ENCODE measurements at regions of chr12 and their contacts with region 1.

Region 1: DNA sequence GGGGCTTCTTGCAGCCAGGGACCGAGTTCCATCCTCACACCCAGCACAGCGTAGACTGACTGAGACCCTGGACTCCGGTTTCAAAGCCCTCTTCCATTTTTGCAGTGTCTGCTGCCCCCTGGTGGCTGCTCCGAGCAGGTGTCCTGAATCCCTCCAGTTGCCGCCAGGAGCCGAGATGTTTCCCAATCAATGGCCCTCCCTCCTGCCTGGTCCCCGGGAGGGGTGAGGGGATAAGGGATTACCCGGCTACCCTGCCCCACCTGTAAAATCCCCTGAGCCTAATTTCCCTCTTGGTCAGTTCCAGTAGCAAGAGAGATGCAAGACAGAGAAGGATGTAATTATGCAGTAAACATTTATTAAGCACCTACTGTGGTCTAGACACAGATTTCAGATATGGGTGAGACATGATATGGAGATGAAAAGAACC is 55.0 kb downstream of the PHETA1 start:
- DNase-seq: peak; percentile 90
- ATAC-seq: peak; percentile 57

Region 2: GRCh38 chr12:110893956-110894355 is 419.9 kb before region 1 on chr12:
- intact Hi-C with region 1: loop called (anchors 5 kb)
- DNase-seq: no peak
- ATAC-seq: no peak

Region 3: GRCh38 chr12:110937104-110937641 is 376.7 kb before region 1 on chr12:
- intact Hi-C with region 1: loop called (anchors 5 kb)
- DNase-seq: peak; percentile 78
- ATAC-seq: peak; percentile 53

Region 4: DNA sequence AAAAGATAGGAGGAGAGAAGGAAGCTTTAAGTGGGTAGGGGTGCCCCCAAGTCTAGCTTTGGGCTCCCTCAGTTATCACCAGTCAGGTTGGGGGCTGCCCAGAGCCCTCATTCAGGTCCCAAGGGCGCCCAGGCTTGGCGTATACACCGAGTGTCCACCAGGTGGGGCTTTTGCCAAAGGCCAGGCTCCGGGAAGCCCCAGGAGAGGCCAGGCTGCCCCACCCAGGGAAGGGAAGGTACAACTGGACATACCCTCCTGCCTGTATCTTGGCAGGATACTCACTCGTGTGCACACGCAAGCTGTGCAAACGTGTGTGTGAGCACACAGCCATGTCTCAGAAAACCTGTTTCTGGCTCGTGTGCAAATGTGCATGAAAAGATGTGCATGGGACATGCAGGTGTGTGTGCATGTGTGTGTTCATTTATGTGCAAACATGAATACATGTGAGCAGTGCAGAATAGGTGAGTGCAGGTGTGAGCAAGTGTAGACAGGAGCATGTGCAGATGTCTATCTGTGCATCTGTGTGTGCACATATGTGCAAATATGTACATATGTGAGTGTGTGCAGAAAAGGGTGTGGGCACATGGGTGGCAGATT is 289.5 kb before region 1 on chr12:
- intact Hi-C with region 1: loop called (anchors 5 kb)
- DNase-seq: peak; percentile 74
- ATAC-seq: peak; percentile 80

Region 5: DNA sequence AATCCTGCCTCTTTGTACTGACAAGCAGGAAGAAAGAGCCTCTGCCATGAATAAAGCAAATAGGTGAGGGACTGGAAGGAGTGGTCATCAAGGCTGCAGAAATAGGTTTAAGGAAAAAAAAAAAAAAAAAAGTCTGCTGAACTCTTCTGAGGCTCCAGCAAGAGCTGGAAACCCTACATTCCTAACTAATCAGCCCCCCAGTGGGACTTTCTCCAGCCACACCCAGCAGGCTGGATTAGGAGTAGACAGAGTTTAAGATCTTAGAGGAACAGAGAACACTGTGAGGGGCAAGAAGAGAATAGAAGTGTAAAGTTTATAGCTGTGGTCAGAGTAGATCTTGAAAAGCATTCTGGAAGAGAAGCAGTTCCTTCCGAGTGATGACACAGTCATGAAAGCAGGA is 218.9 kb after region 1 on chr12:
- intact Hi-C with region 1: no loop called
- DNase-seq: no peak
- ATAC-seq: no peak

Measured in Right ventricle myocardium inferior (tissue), 1 donor.